Caco-2 (cell line): ENCODE measurements at regions of chr9 and their contacts with region 1.

Region 1: DNA sequence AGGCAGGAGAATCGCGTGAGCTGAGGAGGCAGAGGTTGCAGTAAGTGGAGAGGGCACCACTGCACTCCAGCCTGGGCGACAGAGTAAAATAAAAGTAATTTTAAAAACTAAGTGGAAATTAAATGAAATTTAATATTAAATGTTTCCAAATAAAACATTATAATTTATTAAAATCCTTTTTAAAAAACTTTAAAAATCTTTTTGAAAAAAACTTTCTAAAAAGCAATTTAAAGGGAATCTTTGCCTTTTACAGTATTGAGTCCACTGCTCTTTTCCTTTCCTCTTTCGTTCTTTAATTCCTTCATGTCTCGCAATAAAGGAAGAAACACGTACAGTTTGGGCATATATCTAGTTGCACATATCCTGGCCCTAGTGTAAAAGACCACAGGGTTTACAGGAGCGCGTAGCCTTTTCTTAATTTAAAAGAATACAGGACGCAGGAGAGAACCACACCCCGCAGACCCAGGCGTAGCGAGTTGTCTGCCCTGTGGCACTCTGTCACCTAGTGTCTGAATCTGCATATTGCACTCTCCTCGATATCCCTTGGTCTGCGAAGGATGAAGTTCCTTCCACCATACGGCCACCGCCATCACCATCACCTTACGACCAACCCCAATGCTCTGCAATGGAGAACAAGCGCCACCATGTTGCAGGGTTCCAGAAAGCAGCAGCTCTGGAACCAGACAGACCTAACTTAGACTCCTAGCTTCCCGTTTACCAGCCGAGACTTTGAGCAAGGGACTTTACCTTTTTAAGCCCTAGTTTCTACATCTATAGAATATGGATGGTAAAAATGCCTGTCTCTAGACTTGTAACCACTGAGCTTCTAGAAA is 77.6 kb upstream of the DMRT1 start:
- DNase-seq: peak; percentile 79 to 82
- H3K4me3 ChIP-seq: no peak overlapping the region
- H3K4me3 Mint-ChIP-seq: no peak overlapping the region
- H3K27ac Mint-ChIP-seq: no peak overlapping the region
- H3K4me1 ChIP-seq: no peaks in the 10 kb centered on the region; the same call in 1 of the 2 replicates
- H3K4me1 Mint-ChIP-seq: peaks cover 21% of the 10 kb centered on the region
- H3K27me3 ChIP-seq: no peaks in the 10 kb centered on the region
- H3K27me3 Mint-ChIP-seq: no peaks in the 10 kb centered on the region
- CTCF ChIP-seq: peak; percentile 61 to 65

Region 2: DNA sequence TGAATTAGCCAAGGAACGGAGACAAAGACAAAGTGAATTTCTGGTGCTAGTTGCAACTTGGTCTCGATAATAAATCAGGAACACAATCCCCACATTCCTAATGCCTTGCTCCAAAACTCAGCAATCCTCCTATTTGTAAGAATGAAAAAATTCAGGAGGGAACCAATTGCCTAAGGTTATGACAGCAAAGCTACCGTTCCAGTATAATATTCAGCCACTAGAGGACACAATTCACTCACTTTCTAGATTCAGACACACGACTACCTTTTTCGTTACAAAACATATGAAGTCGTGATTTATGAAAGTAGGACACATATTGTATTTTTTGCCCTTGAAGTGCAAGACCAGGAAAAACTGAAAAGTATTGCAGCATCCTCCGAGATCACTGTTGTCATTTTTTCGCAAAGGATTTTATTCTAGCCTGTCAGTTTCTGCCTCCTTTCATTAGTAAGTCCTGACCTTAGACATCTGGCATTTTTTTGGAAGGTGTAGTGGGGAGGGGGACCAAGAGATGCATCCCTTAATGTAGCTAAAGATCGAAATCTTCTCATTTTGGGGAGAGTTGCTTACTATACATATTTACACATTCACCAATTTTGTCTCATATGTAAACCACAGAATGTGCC is 416.1 kb before region 1 on chr9:
- CTCF ChIA-PET with region 1: no interaction called
- POLR2A ChIA-PET with region 1: no interaction called
- intact Hi-C with region 1: loop called (anchors 1 kb)
- DNase-seq: peak in 1 of 2 experiments; percentile 49
- H3K4me3 ChIP-seq: no peak overlapping the region
- H3K4me3 Mint-ChIP-seq: no peak overlapping the region
- H3K27ac Mint-ChIP-seq: no peak overlapping the region
- H3K4me1 ChIP-seq: no peaks in the 10 kb centered on the region
- H3K4me1 Mint-ChIP-seq: no peaks in the 10 kb centered on the region
- H3K27me3 ChIP-seq: no peaks in the 10 kb centered on the region
- H3K27me3 Mint-ChIP-seq: no peaks in the 10 kb centered on the region
- CTCF ChIP-seq: peak; percentile 67 to 77

Region 3: DNA sequence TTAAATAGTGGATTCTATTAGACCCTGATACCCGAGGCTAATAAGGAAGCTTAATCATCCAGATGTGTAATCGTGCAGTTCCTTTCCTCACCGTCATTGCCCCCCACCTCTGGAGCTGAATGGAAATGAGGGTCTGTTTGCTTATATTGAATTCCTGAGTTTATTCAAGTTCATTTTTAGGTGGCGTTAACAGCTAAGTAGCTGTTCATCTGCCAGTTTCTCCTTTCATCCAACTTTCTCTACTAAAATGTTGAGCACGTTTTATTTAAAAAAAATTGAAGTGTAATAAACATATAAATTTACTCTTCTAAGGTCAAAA is 258.2 kb before region 1 on chr9:
- CTCF ChIA-PET with region 1: no interaction called
- POLR2A ChIA-PET with region 1: no interaction called
- intact Hi-C with region 1: no loop called
- DNase-seq: no peak
- H3K4me3 ChIP-seq: peak overlapping the region; percentile 90
- H3K4me3 Mint-ChIP-seq: peak overlapping the region; percentile 84
- H3K27ac Mint-ChIP-seq: peak overlapping the region; percentile 44
- H3K4me1 ChIP-seq: peaks cover 21% of the 10 kb centered on the region
- H3K4me1 Mint-ChIP-seq: peaks cover 15% of the 10 kb centered on the region
- H3K27me3 ChIP-seq: no peaks in the 10 kb centered on the region
- H3K27me3 Mint-ChIP-seq: no peaks in the 10 kb centered on the region
- CTCF ChIP-seq: no peak

Region 4: DNA sequence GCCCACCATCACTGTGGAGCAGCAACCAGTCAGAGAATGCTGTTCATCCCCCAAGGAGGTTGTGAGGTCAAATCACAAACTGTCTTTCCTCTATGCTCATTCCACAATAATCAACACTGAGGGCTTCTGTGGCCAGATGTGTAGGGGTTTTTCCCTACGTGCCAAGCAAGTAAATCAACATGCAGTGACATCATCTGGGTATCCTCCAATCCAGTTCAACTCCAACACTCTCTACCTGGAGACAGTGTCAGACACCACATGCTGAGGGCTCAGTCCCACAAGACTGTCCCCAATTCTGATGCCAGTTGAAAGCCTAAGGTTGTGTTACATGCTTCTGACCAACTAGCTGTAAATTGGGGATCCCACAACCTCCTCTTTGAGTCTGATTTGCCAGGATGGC is 20.3 kb after region 1 on chr9:
- CTCF ChIA-PET with region 1: no interaction called
- POLR2A ChIA-PET with region 1: no interaction called
- intact Hi-C with region 1: no loop called
- DNase-seq: no peak
- H3K4me3 ChIP-seq: no peak overlapping the region
- H3K4me3 Mint-ChIP-seq: no peak overlapping the region
- H3K27ac Mint-ChIP-seq: no peak overlapping the region
- H3K4me1 ChIP-seq: no peaks in the 10 kb centered on the region
- H3K4me1 Mint-ChIP-seq: no peaks in the 10 kb centered on the region
- H3K27me3 ChIP-seq: no peaks in the 10 kb centered on the region
- H3K27me3 Mint-ChIP-seq: no peaks in the 10 kb centered on the region
- CTCF ChIP-seq: no peak

Region 5: GRCh38 chr9:806285-807156 is 42.6 kb after region 1 on chr9:
- CTCF ChIA-PET with region 1: interaction called, 4 read pairs
- POLR2A ChIA-PET with region 1: no interaction called
- intact Hi-C with region 1: loop called (anchors 5 kb)
- DNase-seq: peak in 1 of 2 experiments; percentile 27
- H3K4me3 ChIP-seq: no peak overlapping the region
- H3K4me3 Mint-ChIP-seq: no peak overlapping the region
- H3K27ac Mint-ChIP-seq: no peak overlapping the region
- H3K4me1 ChIP-seq: no peaks in the 10 kb centered on the region
- H3K4me1 Mint-ChIP-seq: peaks cover 5% of the 10 kb centered on the region
- H3K27me3 ChIP-seq: no peaks in the 10 kb centered on the region
- H3K27me3 Mint-ChIP-seq: no peaks in the 10 kb centered on the region
- CTCF ChIP-seq: peak; percentile 58 to 63

Region 6: GRCh38 chr9:818958-819357 is 55.0 kb after region 1 on chr9:
- CTCF ChIA-PET with region 1: no interaction called
- POLR2A ChIA-PET with region 1: no interaction called
- intact Hi-C with region 1: no loop called
- DNase-seq: no peak
- H3K4me3 ChIP-seq: no peak overlapping the region
- H3K4me3 Mint-ChIP-seq: no peak overlapping the region
- H3K27ac Mint-ChIP-seq: no peak overlapping the region
- H3K4me1 ChIP-seq: no peaks in the 10 kb centered on the region
- H3K4me1 Mint-ChIP-seq: no peaks in the 10 kb centered on the region
- H3K27me3 ChIP-seq: no peaks in the 10 kb centered on the region
- H3K27me3 Mint-ChIP-seq: peaks cover 2% of the 10 kb centered on the region
- CTCF ChIP-seq: no peak